Left cardiac atrium (tissue), 4 donors: ENCODE measurements at regions of chr12 and their contacts with region 1.

Region 1: GRCh38 chr12:50564237-50564947 is 59.6 kb downstream of the DIP2B start:
- DNase-seq: no peak
- ATAC-seq: no peak

Region 2: DNA sequence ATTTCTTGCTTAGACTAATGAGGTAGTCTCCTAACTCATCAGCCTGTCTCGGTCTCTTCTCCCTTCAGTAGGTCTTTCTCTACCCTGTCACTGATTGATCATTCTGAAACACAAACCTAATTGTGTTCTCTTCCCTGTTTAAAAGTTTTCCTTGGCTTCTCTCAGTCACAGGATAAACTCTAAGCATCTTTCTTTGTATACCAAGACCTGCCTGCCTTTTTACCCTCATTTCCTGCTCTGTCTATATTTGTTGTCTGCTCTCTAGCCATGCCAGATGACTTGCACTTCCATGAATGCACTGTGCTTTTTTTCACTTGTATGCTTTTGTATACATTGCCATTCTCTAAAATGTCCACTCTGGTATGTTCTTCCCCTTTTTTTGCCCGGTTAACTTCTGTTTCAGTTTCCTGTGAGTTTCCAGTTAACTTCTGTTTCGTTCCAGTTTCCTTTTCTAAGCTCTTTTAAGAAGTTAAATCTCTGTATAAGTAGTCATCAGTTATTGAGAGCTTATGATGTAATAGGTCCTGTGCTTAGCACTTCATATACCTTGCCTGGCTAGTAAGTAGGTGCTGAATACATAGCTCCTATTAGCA is 46.8 kb before region 1 on chr12:
- intact Hi-C with region 1: no loop called
- DNase-seq: no peak
- ATAC-seq: peak in 1 of 2 donors; percentile 55

Region 3: DNA sequence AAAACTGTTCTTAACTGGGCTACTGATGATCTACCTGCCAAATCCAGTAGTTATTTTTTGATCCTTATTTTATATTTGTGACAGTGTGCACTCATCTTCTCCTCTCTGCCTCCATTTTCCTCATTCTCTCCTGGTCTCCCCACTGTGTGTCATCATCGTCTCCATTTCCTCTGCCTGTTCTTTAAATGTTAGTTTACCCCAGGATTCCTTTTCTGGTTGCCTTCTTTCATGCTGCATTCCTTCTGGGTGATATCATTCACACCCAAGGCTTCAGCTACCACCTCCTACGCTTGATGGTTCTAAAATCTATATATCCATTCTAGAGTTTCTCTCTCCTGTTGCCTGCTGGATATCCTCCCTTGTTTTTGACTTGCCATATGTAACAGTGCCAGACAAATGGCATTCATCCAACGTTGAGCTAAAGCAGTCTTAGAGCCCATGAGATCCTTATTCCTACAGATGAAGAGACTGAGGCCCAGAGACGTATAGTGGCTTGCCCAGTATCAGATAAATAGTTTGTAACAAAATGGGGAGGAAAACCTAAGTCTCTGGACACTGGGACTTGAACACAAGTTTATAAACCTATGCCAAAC is 49.9 kb after region 1 on chr12:
- intact Hi-C with region 1: loop called in 1 of 2 experiments (anchors 5 kb)
- DNase-seq: no peak
- ATAC-seq: peak; percentile 28 to 53

Region 4: GRCh38 chr12:50665609-50666008 is 101.2 kb after region 1 on chr12:
- intact Hi-C with region 1: no loop called
- DNase-seq: no peak
- ATAC-seq: no peak

Region 5: GRCh38 chr12:50776749-50777728 is 212.6 kb after region 1 on chr12:
- intact Hi-C with region 1: no loop called
- DNase-seq: no peak
- ATAC-seq: no peak